ENCODE measurements at regions of chr6 and their contacts with region 1.

Region 1: DNA sequence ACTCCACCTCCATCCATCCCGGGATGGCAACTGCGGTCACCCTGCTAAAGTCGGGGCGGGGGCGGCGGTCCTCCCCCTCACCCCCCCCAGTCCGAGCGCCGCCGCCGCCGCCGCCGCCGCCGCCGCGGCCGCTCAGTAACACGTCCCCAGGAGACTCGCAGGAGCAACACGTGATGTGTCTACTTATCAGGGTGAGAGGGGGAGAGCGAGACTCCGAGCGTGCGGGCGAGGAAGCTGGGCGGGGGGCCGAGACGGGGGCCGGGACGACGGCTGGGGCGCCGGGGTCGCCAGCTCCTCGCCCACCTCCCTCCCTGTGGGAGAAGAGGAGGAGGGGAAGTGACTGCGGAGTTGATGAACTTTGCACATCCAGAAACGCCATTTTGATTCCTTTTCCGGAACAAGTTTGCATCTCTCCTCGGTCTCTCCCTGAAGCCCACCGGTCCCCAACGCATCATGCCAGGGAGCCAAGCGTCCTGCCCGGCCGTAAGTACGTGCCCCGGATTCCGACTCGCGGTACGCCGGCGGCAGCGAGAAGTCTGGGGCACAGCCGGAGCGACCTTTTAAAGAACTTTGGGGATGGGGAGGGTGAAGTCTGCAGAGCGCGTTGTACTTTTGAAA is at the start of gene RREB1:
- DNase-seq: peak; percentile 52
- H3K4me3 Mint-ChIP-seq: peak within 1 kb of the TSS; percentile 92
- H3K27ac Mint-ChIP-seq: peak within 1 kb of the TSS; percentile 61
- H3K4me1 Mint-ChIP-seq: peaks cover 7% of the 10 kb centered on the region
- H3K27me3 Mint-ChIP-seq: no peaks in the 10 kb centered on the region
- CTCF ChIP-seq: no peak
- total RNA-seq, gene RREB1: 51.8 and 53.5 TPM in 2 replicates

Region 2: DNA sequence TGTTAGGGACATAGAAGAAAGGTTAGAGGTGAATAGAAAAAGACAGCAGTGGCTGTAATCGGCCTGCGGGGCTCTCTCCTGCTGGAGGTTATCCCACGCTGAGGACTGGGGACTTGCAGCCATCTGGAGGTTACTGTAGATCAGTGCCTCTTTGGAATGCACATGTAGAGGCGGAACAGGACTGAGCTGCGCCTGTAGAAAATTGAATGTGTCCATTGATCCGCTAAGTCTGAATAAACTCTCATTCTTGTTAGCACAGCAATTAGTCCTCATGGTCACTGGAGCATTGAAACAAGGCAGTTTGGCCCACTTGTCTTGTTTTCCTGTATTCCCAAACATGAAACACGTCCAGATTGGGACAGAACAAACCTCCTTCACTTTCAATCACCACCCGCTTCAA is 740.9 kb before region 1 on chr6:
- CTCF ChIA-PET with region 1: no interaction called
- POLR2A ChIA-PET with region 1: no interaction called
- intact Hi-C with region 1: no loop called
- DNase-seq: no peak
- H3K4me3 Mint-ChIP-seq: no peak overlapping the region
- H3K27ac Mint-ChIP-seq: no peak overlapping the region
- H3K4me1 Mint-ChIP-seq: no peaks in the 10 kb centered on the region
- H3K27me3 Mint-ChIP-seq: no peaks in the 10 kb centered on the region
- CTCF ChIP-seq: no peak

Region 3: GRCh38 chr6:6676910-6677441 is 430.7 kb before region 1 on chr6:
- CTCF ChIA-PET with region 1: interaction called, 3 read pairs
- POLR2A ChIA-PET with region 1: interaction called, 4 read pairs
- intact Hi-C with region 1: loop called (anchors 5 kb)
- DNase-seq: peak; percentile 88
- H3K4me3 Mint-ChIP-seq: no peak overlapping the region
- H3K27ac Mint-ChIP-seq: no peak overlapping the region
- H3K4me1 Mint-ChIP-seq: peaks cover 23% of the 10 kb centered on the region
- H3K27me3 Mint-ChIP-seq: no peaks in the 10 kb centered on the region
- CTCF ChIP-seq: peak; percentile 92

Region 4: DNA sequence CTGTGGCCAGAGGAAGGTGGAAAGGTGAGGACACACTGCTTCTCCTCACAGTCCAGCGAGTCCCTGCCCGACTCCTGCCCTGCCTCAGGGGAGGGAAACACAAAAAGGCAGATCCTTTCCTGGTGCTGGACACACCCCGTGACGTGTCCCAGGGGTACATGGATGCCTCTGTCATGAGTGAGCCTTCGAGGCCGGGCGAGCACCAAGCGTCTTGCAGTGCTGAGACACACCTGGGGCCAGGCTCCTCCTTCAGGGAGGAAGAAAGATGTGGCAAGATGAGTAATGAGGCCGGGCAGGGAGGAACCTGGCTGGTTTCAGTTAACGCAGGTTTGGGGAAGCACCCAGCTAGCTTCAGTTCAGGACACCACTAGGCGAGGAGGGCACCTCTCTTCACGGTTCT is 304.1 kb before region 1 on chr6:
- CTCF ChIA-PET with region 1: no interaction called
- POLR2A ChIA-PET with region 1: no interaction called
- intact Hi-C with region 1: loop called (anchors 5 kb)
- DNase-seq: peak; percentile 98
- H3K4me3 Mint-ChIP-seq: peak overlapping the region; percentile 27
- H3K27ac Mint-ChIP-seq: peak overlapping the region; percentile 84
- H3K4me1 Mint-ChIP-seq: peaks cover 39% of the 10 kb centered on the region
- H3K27me3 Mint-ChIP-seq: no peaks in the 10 kb centered on the region
- CTCF ChIP-seq: no peak

Region 5: GRCh38 chr6:6918216-6918983 is 189.3 kb before region 1 on chr6:
- CTCF ChIA-PET with region 1: no interaction called
- POLR2A ChIA-PET with region 1: interaction called, 26 read pairs
- intact Hi-C with region 1: loop called (anchors 2 kb)
- DNase-seq: peak; percentile 73
- H3K4me3 Mint-ChIP-seq: no peak overlapping the region
- H3K27ac Mint-ChIP-seq: no peak overlapping the region
- H3K4me1 Mint-ChIP-seq: peaks cover 27% of the 10 kb centered on the region
- H3K27me3 Mint-ChIP-seq: no peaks in the 10 kb centered on the region
- CTCF ChIP-seq: no peak

Region 6: DNA sequence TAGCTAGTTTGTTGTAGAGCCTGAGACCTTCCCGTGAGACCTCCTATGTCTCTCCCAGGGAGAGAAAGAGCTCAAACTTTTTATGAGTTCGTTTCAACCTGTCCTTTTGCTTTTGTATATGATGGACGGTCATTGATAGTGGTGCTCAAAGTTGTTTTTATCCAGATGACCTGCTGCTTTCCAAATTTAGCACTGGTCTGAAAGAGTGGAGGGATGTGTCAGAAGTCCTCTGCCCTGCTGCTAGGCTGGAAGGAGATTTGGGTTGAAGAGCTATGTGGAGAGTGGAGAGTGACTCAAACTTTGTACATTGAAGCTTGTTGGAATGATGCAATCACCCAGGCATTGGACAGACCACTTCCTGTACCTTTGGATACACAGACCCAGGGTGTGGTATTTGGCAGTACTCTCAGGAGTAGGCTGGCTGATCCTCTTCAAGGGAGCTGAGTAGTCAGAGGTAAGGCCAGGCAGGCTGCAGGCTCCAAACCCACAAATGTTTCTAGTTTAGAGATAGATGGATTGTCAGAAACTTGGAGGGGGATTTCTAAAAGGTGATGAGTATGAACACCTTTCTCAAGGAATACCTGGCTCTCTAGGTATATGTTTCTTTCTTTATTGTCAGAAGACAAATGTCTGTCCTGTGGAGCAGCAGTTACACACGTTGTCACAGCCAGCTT is 49.3 kb before region 1 on chr6:
- CTCF ChIA-PET with region 1: interaction called, 3 read pairs
- POLR2A ChIA-PET with region 1: interaction called, 88 read pairs
- intact Hi-C with region 1: loop called (anchors 2 kb)
- DNase-seq: peak; percentile 99
- H3K4me3 Mint-ChIP-seq: peak overlapping the region; percentile 44
- H3K27ac Mint-ChIP-seq: peak overlapping the region; percentile 91
- H3K4me1 Mint-ChIP-seq: peaks cover 30% of the 10 kb centered on the region
- H3K27me3 Mint-ChIP-seq: no peaks in the 10 kb centered on the region
- CTCF ChIP-seq: no peak

Region 7: GRCh38 chr6:7140631-7141378 is 33.1 kb after region 1 on chr6:
- CTCF ChIA-PET with region 1: interaction called, 3 read pairs
- POLR2A ChIA-PET with region 1: interaction called, 105 read pairs
- intact Hi-C with region 1: no loop called
- DNase-seq: peak; percentile 80
- H3K4me3 Mint-ChIP-seq: peak overlapping the region; percentile 72
- H3K27ac Mint-ChIP-seq: peak overlapping the region; percentile 80
- H3K4me1 Mint-ChIP-seq: peaks cover 38% of the 10 kb centered on the region
- H3K27me3 Mint-ChIP-seq: no peaks in the 10 kb centered on the region
- CTCF ChIP-seq: no peak

Region 8: GRCh38 chr6:7238900-7239589 is 131.4 kb after region 1 on chr6:
- CTCF ChIA-PET with region 1: interaction called, 3 read pairs
- POLR2A ChIA-PET with region 1: interaction called, 3 read pairs
- intact Hi-C with region 1: loop called (anchors 2 kb)
- DNase-seq: peak; percentile 85
- H3K4me3 Mint-ChIP-seq: no peak overlapping the region
- H3K27ac Mint-ChIP-seq: peak overlapping the region; percentile 41
- H3K4me1 Mint-ChIP-seq: peaks cover 30% of the 10 kb centered on the region
- H3K27me3 Mint-ChIP-seq: no peaks in the 10 kb centered on the region
- CTCF ChIP-seq: peak; percentile 45

Region 9: DNA sequence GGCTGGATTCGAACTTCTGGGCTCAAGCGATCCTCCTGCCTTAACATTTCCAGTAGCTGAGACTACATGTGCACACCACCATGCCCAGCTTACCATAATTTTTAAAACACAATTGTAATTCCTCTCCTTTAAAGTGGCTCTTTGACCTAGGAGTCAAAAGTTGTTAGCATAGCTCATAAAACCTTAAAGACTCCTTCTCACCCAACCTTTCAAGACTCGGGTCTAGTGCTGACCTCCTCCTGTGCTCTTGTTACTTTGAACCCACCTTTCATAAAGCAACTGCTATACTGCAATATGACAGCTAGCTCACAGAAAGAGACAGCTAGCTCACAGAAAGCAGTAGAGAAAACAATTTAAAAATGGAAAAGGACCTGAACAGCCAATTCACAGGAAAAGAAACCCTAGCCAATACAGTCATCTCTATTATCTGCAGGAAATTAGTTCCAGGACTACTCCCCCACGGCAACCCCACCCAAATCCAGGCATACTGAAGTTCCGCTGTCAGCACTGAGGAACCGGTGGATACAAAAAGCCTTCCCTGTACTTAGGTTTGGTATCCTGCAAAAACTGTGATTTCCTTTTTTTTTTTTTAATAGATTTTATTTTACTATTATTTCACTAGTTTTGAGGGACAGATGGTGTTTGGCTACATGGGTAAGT is 185.0 kb after region 1 on chr6:
- CTCF ChIA-PET with region 1: no interaction called
- POLR2A ChIA-PET with region 1: no interaction called
- intact Hi-C with region 1: no loop called
- DNase-seq: no peak
- H3K4me3 Mint-ChIP-seq: no peak overlapping the region
- H3K27ac Mint-ChIP-seq: peak overlapping the region; percentile 9
- H3K4me1 Mint-ChIP-seq: no peaks in the 10 kb centered on the region
- H3K27me3 Mint-ChIP-seq: no peaks in the 10 kb centered on the region
- CTCF ChIP-seq: no peak